T-cell (primary cell): ENCODE measurements at regions of chr4 and their contacts with region 1.

Region 1: GRCh38 chr4:123168812-123169211 is 227.8 kb upstream of the SPRY1 start:
- DNase-seq: no peak
- ATAC-seq: no peak
- H3K4me3 ChIP-seq: no peak overlapping the region
- H3K4me3 Mint-ChIP-seq: no peak overlapping the region
- H3K27ac ChIP-seq: no peak overlapping the region
- H3K27ac Mint-ChIP-seq: no peak overlapping the region
- H3K4me1 ChIP-seq: no peaks in the 10 kb centered on the region
- H3K4me1 Mint-ChIP-seq: no peaks in the 10 kb centered on the region
- H3K27me3 ChIP-seq: no peaks in the 10 kb centered on the region
- H3K27me3 Mint-ChIP-seq: no peaks in the 10 kb centered on the region

Region 2: DNA sequence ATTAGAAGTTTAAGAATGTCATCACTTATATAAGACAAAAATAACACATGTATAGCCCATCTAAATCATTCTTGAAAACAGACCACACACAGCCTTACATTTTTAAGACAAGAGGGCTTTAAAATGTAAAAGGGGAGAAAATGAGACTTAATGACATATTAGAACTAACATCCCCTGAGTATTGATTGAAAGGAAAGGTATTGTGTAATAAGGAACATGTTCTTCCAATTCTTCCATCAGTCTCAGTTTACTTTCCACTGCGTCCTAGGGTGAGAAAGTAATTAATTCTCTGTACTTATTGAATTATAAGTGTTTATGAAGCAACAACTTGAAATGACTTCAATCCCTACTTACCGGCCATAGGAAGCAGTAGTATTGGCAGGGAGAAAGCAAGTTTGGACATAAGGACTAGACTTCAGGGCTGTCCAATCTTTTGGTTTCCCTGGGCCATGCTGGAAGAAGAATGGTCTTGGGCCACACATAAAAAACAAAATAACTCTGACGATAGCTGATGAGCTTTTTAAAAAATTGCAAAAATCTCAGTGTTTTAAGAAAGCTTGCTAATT is 25.1 kb after region 1 on chr4:
- CTCF ChIA-PET with region 1: interaction called in 1 of 2 experiments, 10 read pairs
- POLR2A ChIA-PET with region 1: no interaction called
- DNase-seq: no peak
- ATAC-seq: no peak
- H3K4me3 ChIP-seq: no peak overlapping the region
- H3K4me3 Mint-ChIP-seq: no peak overlapping the region
- H3K27ac ChIP-seq: no peak overlapping the region
- H3K27ac Mint-ChIP-seq: no peak overlapping the region
- H3K4me1 ChIP-seq: no peaks in the 10 kb centered on the region
- H3K4me1 Mint-ChIP-seq: peaks cover 0 to 3% (median 0%) of the 10 kb centered on the region in 3 donors
- H3K27me3 ChIP-seq: no peaks in the 10 kb centered on the region
- H3K27me3 Mint-ChIP-seq: no peaks in the 10 kb centered on the region